Stomach (tissue), 19 donors: ENCODE measurements at regions of chr7 and their contacts with region 1.

Region 1: DNA sequence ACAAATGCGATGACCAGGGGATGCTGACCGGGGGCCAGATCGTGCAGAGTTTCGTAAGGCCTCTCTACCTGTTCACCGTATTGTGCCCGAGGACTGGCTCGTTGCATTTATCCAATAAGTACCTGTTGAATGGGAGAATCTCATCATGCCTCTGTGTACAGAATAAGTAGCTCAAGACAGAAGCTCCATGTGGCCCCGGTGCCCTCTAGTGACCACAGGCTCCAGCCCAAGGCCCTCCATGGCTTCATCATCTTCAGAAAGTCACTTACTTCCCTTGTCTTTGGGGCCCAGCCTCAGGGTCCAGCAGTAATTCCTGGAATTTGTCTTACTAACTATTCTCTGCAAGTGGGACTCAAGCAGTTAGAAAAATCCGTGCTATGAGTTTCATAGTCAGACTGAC is 151.0 kb downstream of the CHN2 start:
- DNase-seq: peak; percentile 62 to 66
- H3K4me3 ChIP-seq: no peak overlapping the region
- H3K27ac ChIP-seq: no peak overlapping the region
- H3K4me1 ChIP-seq: peaks cover 0 to 9% (median 4%) of the 10 kb centered on the region in 4 donors
- H3K27me3 ChIP-seq: no peaks in the 10 kb centered on the region
- CTCF ChIP-seq: peak in 3 of 7 experiments; percentile 12 to 36 (median 32)
- EP300 ChIP-seq: no peak
- POLR2A ChIP-seq: no peak

Region 2: DNA sequence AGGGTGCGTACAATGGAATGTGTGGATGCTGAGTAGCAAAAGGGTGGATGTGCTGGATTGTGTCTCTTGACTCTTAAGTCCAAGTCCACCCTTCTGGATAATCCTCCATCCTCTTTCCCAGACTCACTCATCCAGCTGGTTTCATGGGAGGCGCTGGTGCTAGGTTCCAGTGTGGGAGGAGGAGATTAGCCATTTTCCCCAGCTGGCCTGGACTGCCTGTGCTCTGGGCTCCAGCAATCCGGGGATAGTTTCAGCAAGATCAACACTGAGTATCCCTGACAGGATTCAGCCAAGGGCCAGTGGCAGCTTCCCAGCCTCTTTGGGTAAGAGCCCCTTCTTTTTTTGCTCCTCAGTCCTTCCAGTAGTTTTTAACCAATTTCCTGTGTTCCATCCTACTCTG is 365.8 kb before region 1 on chr7:
- intact Hi-C with region 1: no loop called
- DNase-seq: no peak
- H3K4me3 ChIP-seq: no peak overlapping the region
- H3K27ac ChIP-seq: peak overlapping the region in 1 of 5 donors; percentile 38
- H3K4me1 ChIP-seq: peaks cover 2 to 21% (median 10%) of the 10 kb centered on the region in 4 donors
- H3K27me3 ChIP-seq: no peaks in the 10 kb centered on the region
- CTCF ChIP-seq: no peak
- EP300 ChIP-seq: no peak
- POLR2A ChIP-seq: no peak

Region 3: DNA sequence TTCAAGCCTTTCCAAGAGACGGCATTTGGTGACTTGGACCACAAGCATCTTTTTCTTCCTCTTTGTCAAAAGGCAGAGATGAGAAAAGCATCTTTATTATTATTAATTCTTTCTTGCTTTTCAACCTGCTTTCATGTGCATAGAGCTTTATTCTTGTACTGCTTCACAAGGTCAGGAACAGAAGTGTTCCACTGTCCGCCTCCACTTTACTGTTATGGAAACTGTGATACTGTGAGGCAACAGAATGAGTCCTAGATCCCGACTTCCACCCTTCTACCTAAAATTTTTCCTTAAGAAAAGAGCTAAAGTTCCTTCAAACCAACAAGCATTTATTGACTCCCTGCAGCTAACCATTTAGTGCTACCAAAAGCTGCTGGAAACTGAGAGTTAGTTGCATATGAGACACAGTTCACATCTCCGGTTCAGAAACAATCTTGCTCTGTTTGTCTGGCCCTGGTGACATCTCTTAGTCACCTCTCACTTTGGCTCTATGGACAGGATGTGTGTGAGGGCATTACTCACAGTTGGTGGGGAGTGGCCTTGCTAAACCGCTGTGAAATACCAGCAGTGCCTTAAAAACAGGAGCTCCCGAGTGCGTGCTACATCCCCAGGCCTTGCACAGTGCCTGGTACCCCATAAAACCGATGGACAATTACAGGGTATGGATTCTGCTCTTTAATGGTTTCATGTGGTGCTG is 310.4 kb before region 1 on chr7:
- intact Hi-C with region 1: no loop called
- DNase-seq: peak in 1 of 2 donors; percentile 23
- H3K4me3 ChIP-seq: no peak overlapping the region
- H3K27ac ChIP-seq: no peak overlapping the region
- H3K4me1 ChIP-seq: peaks cover 0 to 13% (median 3%) of the 10 kb centered on the region in 4 donors
- H3K27me3 ChIP-seq: no peaks in the 10 kb centered on the region
- CTCF ChIP-seq: no peak
- EP300 ChIP-seq: no peak
- POLR2A ChIP-seq: no peak

Region 4: DNA sequence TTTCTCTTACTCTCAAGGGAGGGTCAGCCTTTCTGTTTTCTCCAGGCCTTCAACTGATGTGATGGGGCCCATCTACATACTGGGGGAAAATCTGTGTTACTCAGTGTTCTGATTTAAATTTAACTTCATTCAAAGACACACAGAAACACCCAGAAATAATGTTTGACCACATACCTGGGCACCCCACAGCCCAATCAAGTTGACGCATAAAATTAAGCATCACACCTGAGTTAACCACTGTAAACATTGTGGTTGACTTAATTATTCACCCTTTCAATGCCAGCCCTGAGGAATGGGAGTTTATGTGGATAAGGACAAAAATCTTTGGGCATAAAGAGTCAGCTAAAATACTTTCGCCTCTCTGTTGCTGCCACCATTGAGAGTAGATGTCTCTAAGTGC is 161.0 kb before region 1 on chr7:
- intact Hi-C with region 1: loop called (anchors 5 kb)
- DNase-seq: no peak
- H3K4me3 ChIP-seq: no peak overlapping the region
- H3K27ac ChIP-seq: no peak overlapping the region
- H3K4me1 ChIP-seq: peaks cover 2 to 4% (median 4%) of the 10 kb centered on the region in 4 donors
- H3K27me3 ChIP-seq: peaks cover 0 to 8% (median 2%) of the 10 kb centered on the region in 3 donors
- CTCF ChIP-seq: no peak
- EP300 ChIP-seq: no peak
- POLR2A ChIP-seq: no peak

Region 5: DNA sequence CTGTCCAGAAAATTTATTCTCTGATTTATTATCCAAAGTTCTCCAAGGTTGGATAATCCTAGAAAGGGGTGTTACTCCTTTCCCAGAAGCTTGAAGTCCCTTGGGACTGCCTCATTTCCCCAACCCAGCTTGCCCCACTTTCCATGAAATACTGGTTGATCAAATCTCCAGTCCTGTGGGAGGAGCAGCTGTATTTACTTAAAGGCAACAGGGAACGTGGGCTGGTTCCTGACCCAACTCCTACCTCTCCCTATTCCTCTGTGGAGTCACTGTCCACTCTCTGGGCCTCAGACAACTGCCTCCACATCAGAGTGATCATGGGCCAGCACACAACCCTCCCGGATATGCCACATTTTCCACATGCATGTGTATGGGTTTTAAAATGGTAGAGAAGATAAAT is 51.8 kb after region 1 on chr7:
- intact Hi-C with region 1: no loop called
- DNase-seq: no peak
- H3K4me3 ChIP-seq: no peak overlapping the region
- H3K27ac ChIP-seq: no peak overlapping the region
- H3K4me1 ChIP-seq: peaks cover 0 to 9% (median 2%) of the 10 kb centered on the region in 4 donors
- H3K27me3 ChIP-seq: no peaks in the 10 kb centered on the region
- CTCF ChIP-seq: no peak
- EP300 ChIP-seq: no peak
- POLR2A ChIP-seq: no peak